CD8-positive, alpha-beta T cell (primary cell): ENCODE measurements at regions of chr6 and their contacts with region 1.

Region 1: DNA sequence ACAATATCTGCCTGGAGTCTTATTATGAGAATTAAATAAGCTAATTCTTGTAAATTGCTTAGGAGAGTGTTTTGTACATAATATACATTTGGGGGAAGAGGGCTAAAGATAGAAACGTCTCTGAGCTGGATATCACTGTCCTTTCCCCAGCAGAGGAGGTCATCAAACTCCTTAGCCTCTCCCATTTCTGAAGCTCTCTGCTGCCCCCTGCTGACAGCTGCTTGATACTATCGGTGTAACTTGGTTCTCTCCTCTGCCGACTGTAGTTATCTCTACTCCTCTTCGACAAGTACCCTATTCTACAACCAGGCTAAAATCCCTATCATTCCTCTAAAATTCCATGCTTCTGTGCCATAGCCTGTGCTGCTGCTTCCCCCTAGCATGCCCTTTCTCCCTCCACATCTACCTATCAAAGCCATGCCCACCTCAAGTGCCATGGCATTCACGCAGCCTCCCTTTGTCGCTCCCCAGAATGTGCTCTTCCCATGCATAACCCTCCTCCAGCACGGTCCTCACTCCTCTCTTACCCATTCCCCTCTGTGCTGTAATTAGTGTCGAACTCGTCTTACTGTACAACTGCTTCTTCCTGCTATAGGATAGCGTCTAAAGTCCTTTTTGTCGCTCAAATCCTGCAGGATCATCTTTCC is 101.2 kb downstream of the EPM2A start:
- DNase-seq: peak; percentile 53 to 81 (median 71)
- ATAC-seq: peak; percentile 71
- H3K4me3 ChIP-seq: no peak overlapping the region
- H3K4me3 Mint-ChIP-seq: no peak overlapping the region
- H3K27ac ChIP-seq: no peak overlapping the region
- H3K27ac Mint-ChIP-seq: no peak overlapping the region
- H3K4me1 ChIP-seq: no peaks in the 10 kb centered on the region
- H3K4me1 Mint-ChIP-seq: peaks cover 7% of the 10 kb centered on the region
- H3K27me3 ChIP-seq: no peaks in the 10 kb centered on the region
- H3K27me3 Mint-ChIP-seq: no peaks in the 10 kb centered on the region
- CTCF ChIP-seq: peak; percentile 79

Region 2: DNA sequence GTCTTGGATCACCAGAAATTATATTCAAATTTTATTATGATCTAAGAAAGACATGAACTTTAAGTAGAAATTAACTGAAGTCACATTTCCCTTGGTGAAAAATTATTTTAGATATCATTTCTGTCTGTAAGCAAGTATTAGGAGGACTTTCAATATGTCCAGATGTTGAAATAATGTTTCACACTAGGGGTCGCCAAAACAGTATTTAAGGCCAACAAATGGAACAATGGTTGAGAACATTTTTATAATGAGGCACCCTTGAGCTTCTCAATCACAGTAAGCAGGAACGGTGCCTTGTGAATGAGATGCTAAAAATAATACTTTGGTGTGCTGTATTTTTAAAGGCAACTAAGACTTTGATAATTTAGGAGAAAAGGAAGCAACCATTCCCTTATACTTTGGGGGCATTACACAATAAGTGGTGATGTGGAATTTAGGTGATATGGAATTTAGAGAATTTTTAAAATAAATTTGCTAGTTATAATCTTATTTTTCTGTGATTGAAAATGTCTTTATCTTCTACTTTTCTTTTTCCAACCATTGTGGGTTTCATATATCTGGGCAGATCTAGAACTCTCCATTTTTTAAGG is 1529.1 kb before region 1 on chr6:
- CTCF ChIA-PET with region 1: no interaction called
- POLR2A ChIA-PET with region 1: no interaction called
- intact Hi-C with region 1: loop called (anchors 10 kb)
- DNase-seq: peak in 5 of 9 experiments; percentile 16 to 83 (median 45)
- ATAC-seq: peak; percentile 78
- H3K4me3 ChIP-seq: no peak overlapping the region
- H3K4me3 Mint-ChIP-seq: no peak overlapping the region
- H3K27ac ChIP-seq: no peak overlapping the region
- H3K27ac Mint-ChIP-seq: no peak overlapping the region
- H3K4me1 ChIP-seq: no peaks in the 10 kb centered on the region
- H3K4me1 Mint-ChIP-seq: peaks cover 2% of the 10 kb centered on the region
- H3K27me3 ChIP-seq: no peaks in the 10 kb centered on the region
- H3K27me3 Mint-ChIP-seq: no peaks in the 10 kb centered on the region
- CTCF ChIP-seq: peak; percentile 79

Region 3: DNA sequence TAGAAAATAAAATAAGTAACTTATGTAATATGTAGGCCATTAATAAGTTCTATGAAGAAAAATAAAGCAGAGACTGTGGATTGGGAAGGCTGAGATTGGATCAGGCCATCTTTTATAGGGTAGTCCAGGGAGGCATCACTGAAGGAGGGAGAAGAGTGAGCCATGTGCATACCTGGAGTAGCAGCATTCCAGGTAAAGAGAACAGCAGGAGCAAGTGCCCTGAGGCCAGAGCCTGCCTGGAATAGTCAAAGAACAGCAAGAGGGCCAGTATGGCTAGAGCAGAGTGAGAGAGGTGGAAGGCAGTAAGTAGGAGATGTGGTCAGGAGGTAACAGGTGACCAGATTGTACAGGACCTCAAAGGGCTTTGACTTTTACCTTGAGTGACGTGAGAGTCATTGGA is 10.9 kb before region 1 on chr6:
- CTCF ChIA-PET with region 1: interaction called, 25 read pairs
- POLR2A ChIA-PET with region 1: no interaction called
- intact Hi-C with region 1: no loop called
- DNase-seq: no peak
- ATAC-seq: no peak
- H3K4me3 ChIP-seq: no peak overlapping the region
- H3K4me3 Mint-ChIP-seq: no peak overlapping the region
- H3K27ac ChIP-seq: no peak overlapping the region
- H3K27ac Mint-ChIP-seq: no peak overlapping the region
- H3K4me1 ChIP-seq: no peaks in the 10 kb centered on the region
- H3K4me1 Mint-ChIP-seq: no peaks in the 10 kb centered on the region
- H3K27me3 ChIP-seq: no peaks in the 10 kb centered on the region
- H3K27me3 Mint-ChIP-seq: no peaks in the 10 kb centered on the region
- CTCF ChIP-seq: no peak